ENCODE measurements at regions of chr3 and their contacts with region 1.

Region 1: GRCh38 chr3:118884748-118885206 is 149.9 kb downstream of the IGSF11 start:
- DNase-seq: peak; percentile 47 to 82
- ATAC-seq: peak; percentile 77

Region 2: DNA sequence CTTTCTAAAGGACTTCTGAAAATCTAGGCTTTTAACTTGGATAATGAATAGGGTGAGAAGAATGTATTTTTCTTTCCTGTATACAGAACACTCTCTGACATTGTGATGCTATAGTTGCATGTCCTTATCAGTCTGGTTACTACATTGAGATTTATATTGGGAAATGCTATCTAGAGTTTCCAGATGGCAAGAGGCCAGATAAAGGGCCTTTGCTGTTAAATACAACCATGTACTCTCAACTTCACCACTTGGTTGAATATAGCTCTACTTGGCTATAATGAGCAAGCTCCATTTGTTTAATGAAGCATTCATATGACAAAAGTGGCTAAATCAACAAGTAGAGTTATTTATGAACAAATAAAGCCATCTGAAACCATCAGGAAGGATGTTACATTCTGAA is 58.8 kb after region 1 on chr3:
- intact Hi-C with region 1: loop called in 1 of 2 experiments (anchors 10 kb)
- DNase-seq: no peak
- ATAC-seq: no peak

Region 3: GRCh38 chr3:119034256-119035013 is 149.7 kb after region 1 on chr3 and contains the start of gene IGSF11:
- intact Hi-C with region 1: loop called in 1 of 2 experiments (anchors 10 kb)
- DNase-seq: peak; percentile 32 to 53
- ATAC-seq: peak; percentile 93
- total RNA-seq, gene IGSF11: 0.27 to 0.50 TPM

Region 4: GRCh38 chr3:119098619-119099222 is 213.9 kb after region 1 on chr3:
- intact Hi-C with region 1: loop called in 1 of 2 experiments (anchors 2 kb)
- DNase-seq: no peak
- ATAC-seq: no peak